IMR-90 (cell line): ENCODE measurements at regions of chr4 and their contacts with region 1.

Region 1: GRCh38 chr4:15690020-15690809 is 8.6 kb downstream of the FAM200B start:
- DNase-seq: peak; percentile 93
- ATAC-seq: peak; percentile 76
- H3K4me3 ChIP-seq: no peak overlapping the region
- H3K27ac ChIP-seq: peak overlapping the region; percentile 76
- H3K4me1 ChIP-seq: peaks cover 7% of the 10 kb centered on the region
- H3K27me3 ChIP-seq: no peaks in the 10 kb centered on the region
- CTCF ChIP-seq: no peak
- POLR2A ChIP-seq: peak; percentile 40; the same call in 1 of the 2 replicates
- RAD21 ChIP-seq: no peak

Region 2: GRCh38 chr4:15349531-15349935 is 340.7 kb before region 1 on chr4:
- CTCF ChIA-PET with region 1: no interaction called
- POLR2A ChIA-PET with region 1: no interaction called
- dilution Hi-C with region 1: no loop called
- in situ Hi-C with region 1: no loop called
- intact Hi-C with region 1: no loop called
- DNase-seq: no peak
- ATAC-seq: no peak
- H3K4me3 ChIP-seq: no peak overlapping the region
- H3K27ac ChIP-seq: no peak overlapping the region
- H3K4me1 ChIP-seq: peaks cover 9% of the 10 kb centered on the region; the same call in 1 of the 2 replicates
- H3K27me3 ChIP-seq: peaks cover 17% of the 10 kb centered on the region
- CTCF ChIP-seq: no peak
- POLR2A ChIP-seq: no peak
- RAD21 ChIP-seq: no peak

Region 3: DNA sequence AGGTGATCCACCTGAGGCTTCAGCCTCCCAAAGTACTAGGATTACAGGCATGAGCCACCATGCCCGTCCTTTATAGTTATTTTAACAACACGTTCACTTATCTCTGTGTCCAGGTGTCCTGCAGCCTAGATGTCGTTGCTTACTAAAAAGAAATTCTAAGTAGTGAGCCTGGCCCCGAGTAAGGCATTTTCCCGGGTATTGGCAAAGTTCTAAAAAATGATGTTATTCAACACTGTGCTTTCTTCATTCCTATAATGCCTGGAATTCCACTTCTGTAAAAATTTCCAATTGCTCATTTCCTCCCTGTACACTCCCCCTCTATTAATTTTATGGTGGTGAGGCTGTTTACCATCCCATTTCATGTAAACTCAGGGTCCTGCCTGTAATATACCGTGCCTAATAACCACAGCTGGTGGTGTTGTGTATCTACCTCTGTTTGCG is 26.8 kb after region 1 on chr4:
- CTCF ChIA-PET with region 1: interaction called, 3 read pairs
- POLR2A ChIA-PET with region 1: no interaction called
- dilution Hi-C with region 1: no loop called
- in situ Hi-C with region 1: no loop called
- intact Hi-C with region 1: loop called (anchors 2 kb)
- DNase-seq: peak; percentile 59
- ATAC-seq: peak; percentile 82
- H3K4me3 ChIP-seq: no peak overlapping the region
- H3K27ac ChIP-seq: peak overlapping the region; percentile 64; the same call in 1 of the 2 replicates
- H3K4me1 ChIP-seq: peaks cover 18% of the 10 kb centered on the region
- H3K27me3 ChIP-seq: no peaks in the 10 kb centered on the region
- CTCF ChIP-seq: no peak
- POLR2A ChIP-seq: no peak
- RAD21 ChIP-seq: no peak